Ascending aorta (tissue), 2 donors: ENCODE measurements at regions of chr16 and their contacts with region 1.

Region 1: DNA sequence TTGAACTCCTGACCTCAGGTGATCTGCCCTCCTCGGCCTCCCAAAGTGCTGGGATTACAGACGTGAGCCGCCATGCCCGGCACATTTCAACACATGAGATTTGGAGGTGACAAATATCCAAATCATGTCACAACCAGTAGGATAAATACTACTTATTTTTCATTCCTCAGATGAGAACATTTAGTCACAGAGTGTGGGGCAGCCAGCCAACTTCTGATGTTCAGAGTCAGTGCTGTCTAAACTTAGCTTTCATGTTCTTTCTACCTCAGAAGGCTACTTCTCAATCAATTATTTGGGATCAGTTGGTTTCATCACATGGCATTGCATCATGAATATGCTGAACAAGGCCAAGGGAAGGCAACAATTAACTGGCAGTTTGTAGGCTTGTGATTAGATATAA is 134.5 kb downstream of the CDH13 start:
- DNase-seq: peak; percentile 63 to 97
- H3K4me3 ChIP-seq: peak overlapping the region in 1 of 2 donors; percentile 54
- H3K27ac ChIP-seq: peak overlapping the region; percentile 78 to 83
- H3K4me1 ChIP-seq: peaks cover 10 to 41% of the 10 kb centered on the region in 2 donors
- H3K27me3 ChIP-seq: no peaks in the 10 kb centered on the region
- CTCF ChIP-seq: no peak

Region 2: DNA sequence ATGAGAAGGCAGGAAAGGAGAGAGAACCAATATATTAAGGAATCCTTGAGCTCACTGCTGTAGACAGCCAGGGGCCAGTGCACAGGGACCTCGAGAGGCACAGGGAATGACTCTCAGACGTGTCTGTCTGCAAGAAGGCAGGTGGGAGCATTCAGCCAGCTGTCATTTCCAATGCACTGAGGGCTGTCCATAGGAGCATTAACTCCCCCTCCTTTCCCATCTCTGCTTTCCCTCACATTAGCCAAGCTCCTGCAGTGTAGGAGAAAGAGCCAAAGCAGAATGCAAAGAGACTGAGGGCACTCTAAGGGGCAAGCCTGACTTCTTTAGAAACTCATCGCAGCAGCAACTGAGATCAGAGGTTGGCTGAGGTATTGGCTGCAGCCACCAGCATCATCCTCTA is 83.9 kb after region 1 on chr16:
- intact Hi-C with region 1: no loop called
- DNase-seq: no peak
- H3K4me3 ChIP-seq: no peak overlapping the region
- H3K27ac ChIP-seq: peak overlapping the region; percentile 12 to 39
- H3K4me1 ChIP-seq: peaks cover 0 to 13% of the 10 kb centered on the region in 2 donors
- H3K27me3 ChIP-seq: no peaks in the 10 kb centered on the region
- CTCF ChIP-seq: no peak

Region 3: DNA sequence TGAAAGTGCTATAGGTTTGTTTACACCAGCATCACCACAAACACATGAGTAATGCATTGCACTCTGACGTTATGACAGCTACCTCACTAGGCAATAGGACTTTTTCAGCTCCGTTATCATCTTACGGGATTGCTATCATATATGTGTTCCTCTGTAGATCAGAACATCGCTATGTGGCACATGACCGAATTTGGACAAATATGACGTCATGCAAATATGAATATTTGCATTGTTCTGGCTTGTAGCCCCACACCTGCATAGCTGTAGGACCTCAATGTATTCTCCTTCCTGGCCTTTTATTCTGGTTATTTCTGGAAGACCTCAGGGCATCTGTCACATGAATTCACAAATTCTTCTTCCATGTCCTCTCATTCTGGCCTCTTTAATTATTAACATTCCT is 258.7 kb after region 1 on chr16:
- intact Hi-C with region 1: loop called (anchors 5 kb)
- DNase-seq: no peak
- H3K4me3 ChIP-seq: no peak overlapping the region
- H3K27ac ChIP-seq: no peak overlapping the region
- H3K4me1 ChIP-seq: peaks cover 0 to 2% of the 10 kb centered on the region in 2 donors
- H3K27me3 ChIP-seq: no peaks in the 10 kb centered on the region
- CTCF ChIP-seq: no peak

Region 4: GRCh38 chr16:83171396-83171795 is 410.2 kb after region 1 on chr16:
- intact Hi-C with region 1: no loop called
- DNase-seq: no peak
- H3K4me3 ChIP-seq: no peak overlapping the region
- H3K27ac ChIP-seq: no peak overlapping the region
- H3K4me1 ChIP-seq: no peaks in the 10 kb centered on the region
- H3K27me3 ChIP-seq: no peaks in the 10 kb centered on the region
- CTCF ChIP-seq: no peak

Region 5: DNA sequence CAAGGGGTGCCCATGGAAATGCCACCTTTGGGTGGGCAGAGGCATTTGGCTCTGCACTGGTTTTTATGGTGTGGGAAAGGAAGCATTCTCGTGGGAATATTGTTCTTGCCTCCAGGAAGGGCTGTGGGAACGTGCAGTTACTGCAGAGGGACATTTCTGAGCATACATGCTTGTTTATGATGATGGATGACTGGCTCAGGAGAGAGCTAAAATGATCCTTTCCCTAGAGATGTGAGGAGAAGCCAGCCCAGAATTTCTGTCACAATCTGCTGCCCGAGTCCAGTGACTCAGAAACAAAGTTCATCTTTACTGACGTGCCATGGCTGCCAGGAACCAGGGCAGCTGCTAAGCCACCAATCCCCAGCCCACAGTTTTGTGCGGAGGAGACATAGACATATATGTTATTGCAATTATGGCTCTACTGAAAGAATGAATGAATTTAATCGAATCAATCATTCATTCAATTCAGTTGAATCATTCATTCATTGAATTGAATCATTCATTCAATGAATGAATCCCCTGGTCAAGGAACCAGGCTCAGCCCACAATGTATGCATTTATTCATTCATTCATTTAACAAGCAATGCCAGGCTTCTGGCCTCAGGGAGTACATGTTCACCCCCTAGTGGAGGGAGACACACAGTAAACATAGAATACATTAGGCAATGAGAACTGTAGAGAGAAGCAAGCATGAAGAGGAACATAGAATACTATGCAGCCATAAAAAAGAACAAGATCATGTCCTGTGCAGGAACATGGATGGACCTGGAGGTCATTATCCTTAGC is 632.2 kb after region 1 on chr16:
- intact Hi-C with region 1: loop called (anchors 5 kb)
- DNase-seq: peak; percentile 9 to 81
- H3K4me3 ChIP-seq: no peak overlapping the region
- H3K27ac ChIP-seq: peak overlapping the region; percentile 71 to 75
- H3K4me1 ChIP-seq: peaks cover 3 to 25% of the 10 kb centered on the region in 2 donors
- H3K27me3 ChIP-seq: no peaks in the 10 kb centered on the region
- CTCF ChIP-seq: peak in 1 of 3 experiments; percentile 14